ENCODE measurements at regions of chr15 and their contacts with region 1.

Region 1: GRCh38 chr15:42056934-42057779 is 36.3 kb upstream of the PLA2G4E start:
- DNase-seq: peak; percentile 25 to 75
- H3K4me3 ChIP-seq: peak overlapping the region in 1 of 2 donors; percentile 51
- H3K27ac ChIP-seq: no peak overlapping the region
- H3K4me1 ChIP-seq: no peaks in the 10 kb centered on the region
- H3K27me3 ChIP-seq: no peaks in the 10 kb centered on the region
- CTCF ChIP-seq: peak; percentile 57 to 69 (median 57)

Region 2: GRCh38 chr15:41894791-41895463 is 162.2 kb before region 1 on chr15:
- intact Hi-C with region 1: loop called (anchors 5 kb)
- DNase-seq: peak; percentile 69 to 90
- H3K4me3 ChIP-seq: peak overlapping the region in 1 of 2 donors; percentile 42
- H3K27ac ChIP-seq: peak overlapping the region; percentile 66 to 76
- H3K4me1 ChIP-seq: peaks cover 0 to 12% of the 10 kb centered on the region in 2 donors
- H3K27me3 ChIP-seq: no peaks in the 10 kb centered on the region
- CTCF ChIP-seq: peak in 2 of 3 experiments; percentile 21 to 38

Region 3: GRCh38 chr15:41930221-41930866 is 126.8 kb before region 1 on chr15:
- intact Hi-C with region 1: loop called (anchors 5 kb)
- DNase-seq: peak in 1 of 2 donors; percentile 88
- H3K4me3 ChIP-seq: no peak overlapping the region
- H3K27ac ChIP-seq: peak overlapping the region; percentile 74 to 80
- H3K4me1 ChIP-seq: peaks cover 35 to 83% of the 10 kb centered on the region in 2 donors
- H3K27me3 ChIP-seq: no peaks in the 10 kb centered on the region
- CTCF ChIP-seq: peak; percentile 23 to 55 (median 49)

Region 4: GRCh38 chr15:42084460-42085235 is 27.5 kb after region 1 on chr15:
- intact Hi-C with region 1: no loop called
- DNase-seq: peak in 1 of 2 donors; percentile 76
- H3K4me3 ChIP-seq: no peak overlapping the region
- H3K27ac ChIP-seq: no peak overlapping the region
- H3K4me1 ChIP-seq: no peaks in the 10 kb centered on the region
- H3K27me3 ChIP-seq: no peaks in the 10 kb centered on the region
- CTCF ChIP-seq: peak; percentile 82 to 92 (median 92)

Region 5: GRCh38 chr15:42118650-42119445 is 61.7 kb after region 1 on chr15:
- intact Hi-C with region 1: no loop called
- DNase-seq: no peak
- H3K4me3 ChIP-seq: no peak overlapping the region
- H3K27ac ChIP-seq: no peak overlapping the region
- H3K4me1 ChIP-seq: no peaks in the 10 kb centered on the region
- H3K27me3 ChIP-seq: no peaks in the 10 kb centered on the region
- CTCF ChIP-seq: no peak

Measured in ascending aorta (tissue), 2 donors.